A673 (cell line): ENCODE measurements at regions of chr11 and their contacts with region 1.

Region 1: DNA sequence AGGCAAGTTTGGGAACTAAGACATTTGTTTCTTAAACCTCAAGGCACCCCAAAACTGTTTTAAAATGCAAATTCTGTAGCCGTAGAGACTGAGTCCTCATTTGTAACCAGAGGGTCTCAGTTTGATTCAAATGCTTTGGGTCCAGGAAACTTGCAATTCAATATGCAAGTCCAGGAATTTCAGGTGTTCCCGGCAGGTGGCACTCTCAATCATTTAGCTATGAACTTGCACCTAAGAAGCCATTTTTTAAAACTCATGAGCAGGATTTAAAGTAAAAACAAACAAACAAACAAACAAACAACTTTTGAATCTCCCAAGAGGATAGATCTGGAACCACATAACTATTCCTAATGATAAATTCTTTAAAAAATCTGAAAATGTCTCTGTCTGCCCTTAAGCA is 8.7 kb upstream of the ABTB2 start:
- DNase-seq: peak; percentile 74
- H3K4me3 ChIP-seq: no peak overlapping the region
- H3K27ac ChIP-seq: no peak overlapping the region
- H3K4me1 ChIP-seq: peaks cover 9% of the 10 kb centered on the region
- H3K27me3 ChIP-seq: no peaks in the 10 kb centered on the region
- CTCF ChIP-seq: peak; percentile 80

Region 2: DNA sequence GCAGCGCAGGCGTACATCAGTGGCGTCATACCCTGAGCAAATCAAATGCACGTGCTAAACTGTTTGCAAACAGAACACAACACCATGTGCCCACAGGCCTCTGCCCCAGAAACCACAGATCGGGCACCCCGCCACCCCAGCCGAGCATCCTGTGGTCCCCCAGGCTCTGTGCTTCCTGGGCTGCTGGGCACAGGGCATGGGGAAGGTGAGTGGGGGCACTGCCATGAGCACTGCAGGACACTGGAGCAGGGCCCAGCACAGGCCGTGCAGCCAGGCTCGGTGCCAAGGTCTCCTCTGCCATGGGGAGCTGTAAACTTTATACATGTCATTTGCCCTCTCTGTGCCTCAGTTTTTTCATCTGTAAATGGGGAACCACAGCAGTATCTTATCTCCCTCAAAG is 198.6 kb before region 1 on chr11:
- CTCF ChIA-PET with region 1: no interaction called
- POLR2A ChIA-PET with region 1: no interaction called
- intact Hi-C with region 1: no loop called
- DNase-seq: no peak
- H3K4me3 ChIP-seq: no peak overlapping the region
- H3K27ac ChIP-seq: no peak overlapping the region
- H3K4me1 ChIP-seq: no peaks in the 10 kb centered on the region
- H3K27me3 ChIP-seq: no peaks in the 10 kb centered on the region
- CTCF ChIP-seq: no peak

Region 3: GRCh38 chr11:34468209-34468841 is 101.8 kb after region 1 on chr11:
- CTCF ChIA-PET with region 1: interaction called, 22 read pairs
- POLR2A ChIA-PET with region 1: interaction called, 5 read pairs
- intact Hi-C with region 1: loop called (anchors 1 kb)
- DNase-seq: peak; percentile 86
- H3K4me3 ChIP-seq: no peak overlapping the region
- H3K27ac ChIP-seq: no peak overlapping the region
- H3K4me1 ChIP-seq: peaks cover 10% of the 10 kb centered on the region
- H3K27me3 ChIP-seq: no peaks in the 10 kb centered on the region
- CTCF ChIP-seq: peak; percentile 100

Region 4: DNA sequence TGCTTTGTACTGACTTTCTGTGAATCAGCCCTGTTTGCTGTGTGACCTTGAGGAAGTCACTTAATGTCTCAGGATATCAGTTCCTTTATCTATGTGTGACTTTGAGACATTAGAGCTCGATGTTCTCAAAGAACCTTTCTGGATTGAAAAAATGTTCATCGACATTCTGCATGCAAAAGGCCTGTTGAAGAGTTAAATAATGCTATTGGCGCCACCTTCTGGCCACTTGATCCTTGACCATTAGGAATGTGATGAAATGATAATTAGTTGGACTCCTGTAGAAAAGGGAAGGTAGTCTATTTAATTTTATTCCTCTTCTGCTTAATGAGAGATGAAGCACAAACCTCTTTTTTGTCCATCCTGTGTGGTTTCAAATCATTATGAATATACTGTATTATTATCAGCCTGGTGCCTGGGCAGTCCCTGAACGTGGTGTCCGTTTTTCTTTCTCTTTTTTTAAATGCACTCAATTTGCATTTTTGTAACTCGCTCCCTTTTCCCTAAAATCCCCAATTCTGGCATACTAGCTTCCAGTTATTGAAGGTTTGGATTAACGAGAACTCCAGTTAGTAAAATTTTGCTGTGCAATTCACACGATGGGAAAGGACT is 126.4 kb after region 1 on chr11:
- CTCF ChIA-PET with region 1: interaction called, 15 read pairs
- POLR2A ChIA-PET with region 1: no interaction called
- intact Hi-C with region 1: loop called (anchors 2 kb)
- DNase-seq: peak; percentile 91
- H3K4me3 ChIP-seq: no peak overlapping the region
- H3K27ac ChIP-seq: no peak overlapping the region
- H3K4me1 ChIP-seq: no peaks in the 10 kb centered on the region
- H3K27me3 ChIP-seq: no peaks in the 10 kb centered on the region
- CTCF ChIP-seq: peak; percentile 99

Region 5: GRCh38 chr11:34890812-34891211 is 524.3 kb after region 1 on chr11:
- CTCF ChIA-PET with region 1: no interaction called
- POLR2A ChIA-PET with region 1: no interaction called
- intact Hi-C with region 1: loop called (anchors 10 kb)
- DNase-seq: peak; percentile 67
- H3K4me3 ChIP-seq: no peak overlapping the region
- H3K27ac ChIP-seq: no peak overlapping the region
- H3K4me1 ChIP-seq: no peaks in the 10 kb centered on the region
- H3K27me3 ChIP-seq: no peaks in the 10 kb centered on the region
- CTCF ChIP-seq: peak; percentile 74